A549 (cell line): ENCODE measurements at regions of chr2 and their contacts with region 1.

Region 1: DNA sequence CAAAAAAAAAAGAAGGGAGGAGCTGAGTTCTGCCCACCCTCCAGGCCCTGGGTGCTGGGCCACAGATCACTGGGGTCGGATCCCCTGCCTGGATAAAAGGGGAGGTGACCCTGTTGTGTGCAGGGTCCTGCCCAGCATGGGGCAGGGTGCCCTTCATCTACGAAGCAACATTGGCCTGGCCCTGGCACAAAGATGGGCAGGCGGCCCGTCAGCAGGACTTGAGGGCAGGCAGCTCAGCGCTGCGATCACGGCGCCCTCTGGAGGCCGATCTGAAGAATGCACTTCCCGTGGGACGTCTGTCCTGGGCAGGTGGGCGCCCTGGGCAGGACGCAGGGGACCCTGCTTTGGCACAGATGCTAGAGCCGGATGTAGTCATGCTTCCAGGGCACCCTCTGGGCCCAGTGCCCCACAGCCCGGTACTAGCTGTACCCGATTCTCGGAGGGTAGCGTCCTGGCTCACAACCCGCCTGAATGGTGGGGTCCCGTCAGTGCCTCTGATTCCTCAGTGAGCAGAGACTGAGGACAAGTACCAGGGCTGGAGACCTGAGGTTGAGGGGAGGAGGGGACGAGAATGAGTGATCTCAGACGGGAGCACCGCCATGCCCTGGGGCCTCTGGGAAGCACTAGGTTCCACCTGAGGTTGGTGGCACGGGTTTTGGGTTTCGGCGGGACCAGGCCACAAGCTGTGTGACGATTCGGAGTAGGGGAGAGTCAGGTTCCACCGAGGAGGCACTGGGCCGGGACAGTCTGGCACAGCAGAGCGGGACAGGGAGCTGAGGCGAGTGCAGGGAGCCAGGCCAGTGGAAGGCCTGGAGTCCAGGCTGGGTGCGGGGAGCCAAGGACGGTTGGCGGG is 18.0 kb downstream of the ARID5A start:
- DNase-seq: peak; percentile 37 to 69
- ATAC-seq: peak in 1 of 2 experiments; percentile 48; a peak in 3 of 6 replicates
- H3K4me3 ChIP-seq: no peak overlapping the region
- H3K27ac ChIP-seq: peak overlapping the region; percentile 87 to 88
- H3K4me1 ChIP-seq: peaks cover 54% of the 10 kb centered on the region
- CTCF ChIP-seq: peak; percentile 74
- EP300 ChIP-seq: no peak
- POLR2A ChIP-seq: no peak
- RAD21 ChIP-seq: peak; percentile 60 to 61

Region 2: DNA sequence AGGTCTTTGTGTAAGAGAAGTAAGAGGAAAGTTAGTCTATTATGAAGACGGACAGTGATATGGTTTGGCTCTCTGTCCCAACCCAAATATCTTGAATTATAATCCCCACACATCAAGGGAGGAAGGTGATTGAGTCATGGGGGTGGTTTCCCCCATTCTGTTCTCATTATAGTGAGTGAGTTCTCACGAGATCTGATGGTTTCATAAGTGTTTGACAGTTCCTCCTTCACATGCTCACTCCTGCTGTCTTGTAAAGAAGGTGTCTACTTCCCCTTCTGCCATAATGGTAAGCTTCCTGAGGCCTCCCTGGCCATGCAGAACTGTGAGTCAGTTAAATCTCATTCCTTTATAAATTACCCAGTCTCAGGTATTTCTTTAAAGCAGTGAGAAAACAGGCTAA is 117.0 kb before region 1 on chr2:
- CTCF ChIA-PET with region 1: no interaction called
- POLR2A ChIA-PET with region 1: no interaction called
- DNase-seq: no peak
- ATAC-seq: no peak
- H3K4me3 ChIP-seq: no peak overlapping the region
- H3K27ac ChIP-seq: no peak overlapping the region
- H3K4me1 ChIP-seq: no peaks in the 10 kb centered on the region
- CTCF ChIP-seq: no peak
- EP300 ChIP-seq: no peak
- POLR2A ChIP-seq: no peak
- RAD21 ChIP-seq: no peak

Region 3: DNA sequence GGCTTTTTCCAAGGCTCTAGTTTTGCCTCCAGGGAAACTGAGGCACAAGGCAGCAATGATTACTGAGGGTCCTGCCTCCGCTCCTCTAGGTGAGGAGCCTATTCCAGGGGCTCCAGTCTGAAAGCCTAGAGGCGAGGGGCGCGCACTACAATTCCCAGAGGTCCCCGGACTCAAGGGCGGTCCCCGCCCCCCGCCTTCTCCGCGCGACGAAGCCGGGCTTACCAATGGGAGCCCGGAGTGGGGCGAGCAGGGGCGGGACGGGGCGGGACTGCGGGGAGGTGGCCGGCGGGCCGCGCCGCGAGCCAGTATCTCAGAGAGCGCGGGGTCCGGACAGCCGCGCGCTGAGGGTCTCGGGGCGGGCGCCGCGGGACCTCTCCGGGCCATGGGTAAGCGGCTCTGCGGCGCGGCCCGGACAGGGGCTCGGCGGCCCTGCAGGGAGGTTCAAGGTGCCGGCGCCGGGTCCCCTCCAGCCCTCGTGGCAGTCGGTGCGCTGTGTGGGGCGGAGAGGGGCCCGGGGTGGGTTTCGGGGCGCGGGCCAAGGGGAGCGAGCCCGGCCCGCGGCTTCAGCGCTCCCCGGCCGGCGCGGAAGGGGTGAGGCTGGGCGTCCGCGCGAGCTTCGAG is 18.0 kb before region 1 on chr2 and contains the start of gene ARID5A:
- CTCF ChIA-PET with region 1: interaction called, 60 read pairs
- POLR2A ChIA-PET with region 1: no interaction called
- DNase-seq: peak; percentile 84 to 90
- ATAC-seq: peak; percentile 85 to 96
- H3K4me3 ChIP-seq: peak within 1 kb of the TSS; percentile 99
- H3K27ac ChIP-seq: peak within 1 kb of the TSS; percentile 80 to 88
- H3K4me1 ChIP-seq: peaks cover 45% of the 10 kb centered on the region
- CTCF ChIP-seq: no peak
- EP300 ChIP-seq: no peak
- POLR2A ChIP-seq: peak; percentile 30
- RAD21 ChIP-seq: no peak
- polyA plus RNA-seq, gene ARID5A: 1.2 and 1.5 TPM in 2 replicates

Region 4: GRCh38 chr2:96565111-96565510 is 10.6 kb after region 1 on chr2:
- CTCF ChIA-PET with region 1: interaction called, 29 read pairs
- POLR2A ChIA-PET with region 1: no interaction called
- DNase-seq: no peak
- ATAC-seq: no peak
- H3K4me3 ChIP-seq: no peak overlapping the region
- H3K27ac ChIP-seq: no peak overlapping the region
- H3K4me1 ChIP-seq: 0 out of 3 replicates have a peak, but pooled peaks cover 2% of the 10 kb centered on the region
- CTCF ChIP-seq: no peak
- EP300 ChIP-seq: no peak
- POLR2A ChIP-seq: no peak
- RAD21 ChIP-seq: no peak

Region 5: GRCh38 chr2:96594691-96595152 is 40.2 kb after region 1 on chr2:
- CTCF ChIA-PET with region 1: interaction called, 14 read pairs
- POLR2A ChIA-PET with region 1: no interaction called
- DNase-seq: no peak
- ATAC-seq: no peak
- H3K4me3 ChIP-seq: no peak overlapping the region
- H3K27ac ChIP-seq: no peak overlapping the region
- H3K4me1 ChIP-seq: no peaks in the 10 kb centered on the region
- CTCF ChIP-seq: no peak
- EP300 ChIP-seq: no peak
- POLR2A ChIP-seq: no peak
- RAD21 ChIP-seq: no peak

Region 6: GRCh38 chr2:96631804-96632435 is 77.4 kb after region 1 on chr2:
- CTCF ChIA-PET with region 1: interaction called, 12 read pairs
- POLR2A ChIA-PET with region 1: interaction called, 4 read pairs
- DNase-seq: peak in 1 of 2 experiments; percentile 38
- ATAC-seq: peak; percentile 63 to 70; a peak in 4 of 6 replicates
- H3K4me3 ChIP-seq: no peak overlapping the region
- H3K27ac ChIP-seq: peak overlapping the region; percentile 3 to 59; a peak in 4 of 6 replicates
- H3K4me1 ChIP-seq: peaks cover 45% of the 10 kb centered on the region
- CTCF ChIP-seq: no peak
- EP300 ChIP-seq: no peak
- POLR2A ChIP-seq: no peak
- RAD21 ChIP-seq: no peak

Region 7: GRCh38 chr2:96760036-96760985 is 205.8 kb after region 1 on chr2 and contains the start of gene CNNM4:
- CTCF ChIA-PET with region 1: interaction called, 186 read pairs
- POLR2A ChIA-PET with region 1: interaction called, 6 read pairs
- DNase-seq: peak; percentile 86 to 93
- ATAC-seq: peak; percentile 93 to 95
- H3K4me3 ChIP-seq: peak within 1 kb of the TSS; percentile 55
- H3K27ac ChIP-seq: peak within 1 kb of the TSS; percentile 80 to 93
- H3K4me1 ChIP-seq: peaks cover 38% of the 10 kb centered on the region
- CTCF ChIP-seq: no peak
- EP300 ChIP-seq: no peak
- POLR2A ChIP-seq: peak; percentile 92
- RAD21 ChIP-seq: no peak; a peak in 1 of 5 replicates
- polyA plus RNA-seq, gene CNNM4: 11.2 and 15.0 TPM in 2 replicates

Region 8: GRCh38 chr2:96816128-96816835 is 261.8 kb after region 1 on chr2 and contains the start of gene CNNM3:
- CTCF ChIA-PET with region 1: interaction called, 10 read pairs
- POLR2A ChIA-PET with region 1: interaction called, 3 read pairs
- DNase-seq: peak; percentile 93 to 96
- ATAC-seq: peak; percentile 88 to 97
- H3K4me3 ChIP-seq: peak within 1 kb of the TSS; percentile 92
- H3K27ac ChIP-seq: peak within 1 kb of the TSS; percentile 91 to 94
- H3K4me1 ChIP-seq: peaks cover 30% of the 10 kb centered on the region
- CTCF ChIP-seq: peak; percentile 27
- EP300 ChIP-seq: no peak
- POLR2A ChIP-seq: peak; percentile 68
- RAD21 ChIP-seq: no peak; a peak in 2 of 5 replicates
- polyA plus RNA-seq, gene CNNM3: 11.8 and 13.6 TPM in 2 replicates